HepG2 (cell line): ENCODE measurements at regions of chr17 and their contacts with region 1.

Region 1: DNA sequence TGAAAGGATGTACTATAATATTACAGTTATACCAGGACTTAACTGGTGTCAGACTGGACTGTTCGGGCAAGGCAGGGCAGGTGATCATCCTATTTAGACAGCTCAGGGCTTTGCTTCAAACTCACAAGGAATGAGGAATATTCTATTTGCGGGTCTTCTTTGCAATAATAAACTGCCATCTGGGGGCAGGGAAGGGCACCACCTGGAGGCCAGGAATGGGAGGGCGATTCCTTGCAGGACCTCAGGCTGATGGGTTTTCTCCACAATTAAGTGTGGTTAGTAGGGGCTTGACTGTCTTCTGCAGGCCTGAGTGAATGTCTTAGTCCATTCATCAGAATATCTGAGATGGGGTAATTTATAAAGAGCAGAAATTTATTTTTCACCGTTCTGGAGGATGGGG is 424.1 kb downstream of the CA10 start:
- DNase-seq: no peak
- ATAC-seq: peak; percentile 66
- H3K4me3 ChIP-seq: no peak overlapping the region
- H3K27ac ChIP-seq: no peak overlapping the region
- H3K4me1 ChIP-seq: no peaks in the 10 kb centered on the region
- H3K27me3 ChIP-seq: peaks cover 0 to 11% of the 10 kb centered on the region in 2 experiments; a peak in 2 of 5 replicates
- CTCF ChIP-seq: peak; percentile 37
- EP300 ChIP-seq: no peak
- POLR2A ChIP-seq: no peak
- RAD21 ChIP-seq: no peak

Region 2: GRCh38 chr17:51585514-51586104 is 148.9 kb before region 1 on chr17:
- CTCF ChIA-PET with region 1: interaction called, 9 read pairs
- POLR2A ChIA-PET with region 1: no interaction called
- in situ Hi-C with region 1: no loop called
- intact Hi-C with region 1: loop called (anchors 1 kb)
- DNase-seq: peak; percentile 30
- ATAC-seq: peak; percentile 90
- H3K4me3 ChIP-seq: no peak overlapping the region
- H3K27ac ChIP-seq: no peak overlapping the region
- H3K4me1 ChIP-seq: no peaks in the 10 kb centered on the region
- H3K27me3 ChIP-seq: no peaks in the 10 kb centered on the region
- CTCF ChIP-seq: peak; percentile 80
- EP300 ChIP-seq: no peak
- POLR2A ChIP-seq: no peak
- RAD21 ChIP-seq: peak; percentile 57

Region 3: GRCh38 chr17:51682115-51682514 is 52.3 kb before region 1 on chr17:
- CTCF ChIA-PET with region 1: no interaction called
- POLR2A ChIA-PET with region 1: no interaction called
- in situ Hi-C with region 1: loop called (anchors 5 kb)
- intact Hi-C with region 1: no loop called
- DNase-seq: no peak
- ATAC-seq: no peak
- H3K4me3 ChIP-seq: no peak overlapping the region
- H3K27ac ChIP-seq: no peak overlapping the region
- H3K4me1 ChIP-seq: no peaks in the 10 kb centered on the region
- H3K27me3 ChIP-seq: 0 out of 5 replicates have a peak, but pooled peaks cover 0 to 3% of the 10 kb centered on the region in 2 experiments
- CTCF ChIP-seq: no peak
- EP300 ChIP-seq: no peak
- POLR2A ChIP-seq: no peak
- RAD21 ChIP-seq: no peak

Region 4: GRCh38 chr17:52064791-52065211 is 330.3 kb after region 1 on chr17:
- CTCF ChIA-PET with region 1: no interaction called
- POLR2A ChIA-PET with region 1: no interaction called
- in situ Hi-C with region 1: no loop called
- intact Hi-C with region 1: no loop called
- DNase-seq: no peak
- ATAC-seq: no peak
- H3K4me3 ChIP-seq: no peak overlapping the region
- H3K27ac ChIP-seq: no peak overlapping the region
- H3K4me1 ChIP-seq: no peaks in the 10 kb centered on the region
- H3K27me3 ChIP-seq: no peaks in the 10 kb centered on the region
- CTCF ChIP-seq: no peak
- EP300 ChIP-seq: no peak
- POLR2A ChIP-seq: no peak
- RAD21 ChIP-seq: no peak